WTC11 (cell line): ENCODE measurements at regions of chr22 and their contacts with region 1.

Region 1: DNA sequence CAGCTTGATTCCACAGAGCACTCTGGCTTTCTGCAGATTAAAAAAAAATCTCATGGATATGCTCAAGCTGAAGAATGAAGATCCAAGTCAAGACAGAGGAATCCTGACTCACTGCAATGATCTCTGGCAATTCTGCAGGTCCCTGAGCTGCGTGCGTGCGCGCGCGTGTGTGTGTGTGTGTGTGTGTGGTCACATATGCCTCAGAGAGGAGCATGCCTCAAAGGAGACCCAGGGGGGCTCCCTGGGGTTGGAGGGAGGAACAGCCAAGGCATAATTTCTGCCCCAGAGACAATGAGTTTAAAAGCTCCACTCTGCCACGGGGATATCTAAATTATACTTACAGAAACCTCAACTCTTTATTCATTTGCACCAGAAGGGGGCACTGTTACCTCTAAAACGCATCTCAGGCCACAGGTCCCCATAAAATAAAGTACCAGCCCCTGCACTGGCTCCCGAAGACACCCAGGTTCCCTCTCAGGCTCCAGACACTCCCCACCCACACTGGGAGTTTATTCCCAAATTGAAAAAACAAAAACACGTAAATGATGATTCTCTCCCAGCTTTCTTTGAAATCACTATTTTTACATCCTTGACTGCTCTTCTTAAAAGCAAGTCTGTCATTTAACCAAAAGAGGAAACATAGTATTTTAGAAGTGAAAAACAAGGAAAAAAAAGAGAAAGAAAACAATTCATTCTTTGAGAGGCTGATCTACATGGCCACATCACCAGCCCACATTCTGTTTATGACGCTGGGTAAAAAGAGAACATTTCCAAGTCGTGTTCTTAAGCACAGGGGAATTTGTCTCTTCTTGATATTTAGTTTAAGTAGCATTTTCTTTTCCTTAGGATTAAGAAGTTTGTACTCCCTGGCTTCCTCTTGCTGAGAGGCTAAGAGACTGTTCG is 401.0 kb downstream of the LARGE1 start:
- DNase-seq: peak; percentile 30
- ATAC-seq: peak; percentile 82
- H3K4me3 Mint-ChIP-seq: no peak overlapping the region
- H3K27ac Mint-ChIP-seq: peak overlapping the region; percentile 14; the same call in 1 of the 2 replicates
- H3K4me1 Mint-ChIP-seq: peaks cover 13% of the 10 kb centered on the region
- H3K27me3 Mint-ChIP-seq: no peaks in the 10 kb centered on the region
- CTCF ChIP-seq: peak; percentile 56

Region 2: GRCh38 chr22:33302049-33302545 is 217.2 kb before region 1 on chr22:
- CTCF ChIA-PET with region 1: interaction called, 15 read pairs
- POLR2A ChIA-PET with region 1: no interaction called
- DNase-seq: peak; percentile 92
- ATAC-seq: peak; percentile 96
- H3K4me3 Mint-ChIP-seq: no peak overlapping the region
- H3K27ac Mint-ChIP-seq: peak overlapping the region; percentile 8; the same call in 1 of the 2 replicates
- H3K4me1 Mint-ChIP-seq: peaks cover 4% of the 10 kb centered on the region
- H3K27me3 Mint-ChIP-seq: no peaks in the 10 kb centered on the region
- CTCF ChIP-seq: peak; percentile 87

Region 3: GRCh38 chr22:33579448-33580093 is 60.2 kb after region 1 on chr22:
- CTCF ChIA-PET with region 1: interaction called, 12 read pairs
- POLR2A ChIA-PET with region 1: no interaction called
- DNase-seq: peak; percentile 85
- ATAC-seq: peak; percentile 98
- H3K4me3 Mint-ChIP-seq: no peak overlapping the region
- H3K27ac Mint-ChIP-seq: 0 out of 2 replicates have a peak overlapping the region, but pooled peaks have one; percentile 28
- H3K4me1 Mint-ChIP-seq: peaks cover 12% of the 10 kb centered on the region
- H3K27me3 Mint-ChIP-seq: no peaks in the 10 kb centered on the region
- CTCF ChIP-seq: peak; percentile 79